BJ (cell line): ENCODE measurements at regions of chr14 and their contacts with region 1.

Region 1: GRCh38 chr14:49852301-49853157 is at the start of gene NEMF:
- DNase-seq: peak; percentile 47
- H3K4me3 ChIP-seq: peak within 1 kb of the TSS; percentile 88
- H3K27me3 ChIP-seq: no peaks in the 10 kb centered on the region
- CTCF ChIP-seq: peak; percentile 79
- polyA plus RNA-seq, gene NEMF: 12.6 and 28.5 TPM in 2 replicates

Region 2: DNA sequence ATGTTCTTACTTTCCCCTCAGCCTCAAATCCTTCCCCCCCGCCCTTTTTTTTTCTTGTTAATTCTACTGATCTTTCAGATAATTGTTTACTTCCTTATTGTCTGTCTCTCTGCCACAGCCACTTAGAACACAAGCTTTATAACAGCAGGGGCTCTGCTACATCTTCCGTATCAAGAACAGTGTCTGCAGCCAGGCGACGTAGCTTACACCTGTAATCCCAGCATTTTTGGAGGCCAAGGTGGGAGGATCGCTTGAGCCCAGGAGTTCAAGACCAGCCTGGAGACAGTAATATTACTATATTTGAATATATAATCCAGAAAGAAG is 373.4 kb after region 1 on chr14:
- CTCF ChIA-PET with region 1: interaction called, 4 read pairs
- POLR2A ChIA-PET with region 1: interaction called, 12 read pairs
- DNase-seq: no peak
- H3K4me3 ChIP-seq: no peak overlapping the region
- H3K27me3 ChIP-seq: no peaks in the 10 kb centered on the region
- CTCF ChIP-seq: no peak